ENCODE measurements at regions of chr2 and their contacts with region 1.

Region 1: DNA sequence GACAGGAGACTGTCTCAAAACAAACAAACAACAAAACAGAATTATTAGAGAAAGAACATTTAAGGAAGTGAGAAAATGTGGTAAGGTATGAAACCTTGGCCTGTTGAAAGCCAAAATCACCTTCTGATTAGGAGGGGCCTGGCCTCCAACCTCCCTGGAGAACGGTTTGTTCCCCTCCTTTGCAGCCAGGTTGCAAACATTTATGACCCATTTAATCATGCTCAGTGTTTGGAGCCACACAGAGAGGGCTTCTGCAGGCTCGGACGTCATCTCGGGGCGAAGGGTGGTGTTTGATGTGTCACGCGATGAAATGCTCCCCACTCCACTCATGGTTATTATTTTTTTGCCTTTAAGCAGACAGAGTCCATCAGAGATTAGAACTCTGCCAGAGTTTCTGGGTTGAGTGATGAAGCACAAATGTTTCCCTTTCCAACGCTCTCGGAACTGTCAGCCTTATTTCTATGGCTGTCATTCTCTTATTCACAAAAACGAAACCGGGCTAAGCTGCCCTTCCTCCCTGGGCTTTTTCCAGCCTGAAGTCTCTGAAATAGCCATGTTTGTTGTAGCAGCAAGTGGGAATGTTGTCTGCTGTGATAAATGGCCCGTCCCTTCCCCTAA is 33.6 kb upstream of the ROCK2 start:
- DNase-seq: no peak
- ATAC-seq: no peak
- H3K4me3 ChIP-seq: no peak overlapping the region
- H3K27ac ChIP-seq: no peak overlapping the region
- H3K4me1 ChIP-seq: peaks cover 14% of the 10 kb centered on the region
- H3K27me3 ChIP-seq: no peaks in the 10 kb centered on the region
- CTCF ChIP-seq: no peak

Region 2: GRCh38 chr2:11187083-11187619 is 190.9 kb before region 1 on chr2:
- CTCF ChIA-PET with region 1: no interaction called
- POLR2A ChIA-PET with region 1: interaction called, 12 read pairs
- in situ Hi-C with region 1: no loop called
- intact Hi-C with region 1: no loop called
- DNase-seq: peak; percentile 22
- ATAC-seq: peak; percentile 48; the same call in 1 of the 2 replicates
- H3K4me3 ChIP-seq: no peak overlapping the region
- H3K27ac ChIP-seq: no peak overlapping the region
- H3K4me1 ChIP-seq: no peaks in the 10 kb centered on the region
- H3K27me3 ChIP-seq: no peaks in the 10 kb centered on the region
- CTCF ChIP-seq: no peak

Region 3: DNA sequence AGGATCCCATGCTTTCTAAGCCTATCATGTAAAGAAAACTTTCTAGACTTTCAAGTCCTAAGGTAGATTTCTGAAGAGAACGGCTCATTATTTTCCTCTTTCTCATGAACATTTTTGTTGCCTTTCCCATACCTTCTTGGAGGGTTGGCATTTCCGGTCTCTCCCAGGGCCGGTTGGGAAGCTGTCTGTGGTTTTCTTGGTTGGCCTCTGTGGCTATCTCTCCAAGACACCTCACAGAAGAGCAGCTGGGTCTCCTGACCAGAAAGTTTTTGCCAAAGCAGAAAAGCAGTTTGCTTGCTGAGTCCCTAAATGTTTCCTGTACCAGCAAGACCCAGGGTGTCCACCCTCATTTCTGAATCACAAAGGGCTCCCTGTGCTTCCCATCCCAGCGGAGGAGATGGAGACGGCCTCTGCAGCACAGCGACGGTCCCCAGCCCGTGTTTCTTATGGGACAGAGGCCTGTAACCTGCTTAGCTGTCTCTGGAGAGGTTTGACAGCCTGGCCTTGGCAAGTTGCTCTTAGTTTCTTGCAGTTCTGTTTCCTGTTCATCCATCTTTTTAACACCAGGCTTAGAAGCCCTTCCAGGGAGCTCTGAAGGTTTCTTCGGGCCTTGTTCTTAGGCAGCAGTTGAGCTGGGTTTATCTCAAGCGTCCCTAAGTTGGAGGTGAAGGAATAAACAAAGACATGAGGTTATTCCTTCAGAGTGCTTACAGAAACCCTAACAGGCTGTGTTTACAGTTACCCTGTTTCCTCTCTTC is 195.6 kb after region 1 on chr2:
- CTCF ChIA-PET with region 1: no interaction called
- POLR2A ChIA-PET with region 1: no interaction called
- in situ Hi-C with region 1: no loop called
- intact Hi-C with region 1: no loop called
- DNase-seq: no peak
- ATAC-seq: no peak
- H3K4me3 ChIP-seq: no peak overlapping the region
- H3K27ac ChIP-seq: no peak overlapping the region
- H3K4me1 ChIP-seq: no peaks in the 10 kb centered on the region
- H3K27me3 ChIP-seq: no peaks in the 10 kb centered on the region; the same call in 1 of the 2 replicates
- CTCF ChIP-seq: no peak

Region 4: GRCh38 chr2:11805024-11805423 is 427.0 kb after region 1 on chr2:
- CTCF ChIA-PET with region 1: no interaction called
- POLR2A ChIA-PET with region 1: interaction called, 11 read pairs
- in situ Hi-C with region 1: no loop called
- intact Hi-C with region 1: no loop called
- DNase-seq: no peak
- ATAC-seq: no peak
- H3K4me3 ChIP-seq: no peak overlapping the region
- H3K27ac ChIP-seq: no peak overlapping the region
- H3K4me1 ChIP-seq: no peaks in the 10 kb centered on the region
- H3K27me3 ChIP-seq: no peaks in the 10 kb centered on the region
- CTCF ChIP-seq: no peak